AG04450 (cell line): ENCODE measurements at regions of chr3 and their contacts with region 1.

Region 1: GRCh38 chr3:108914774-108915641 is 38.7 kb downstream of the GUCA1C start:
- DNase-seq: peak; percentile 32
- H3K4me3 ChIP-seq: no peak overlapping the region
- H3K27ac ChIP-seq: no peak overlapping the region
- H3K27me3 ChIP-seq: no peaks in the 10 kb centered on the region
- CTCF ChIP-seq: peak; percentile 92

Region 2: DNA sequence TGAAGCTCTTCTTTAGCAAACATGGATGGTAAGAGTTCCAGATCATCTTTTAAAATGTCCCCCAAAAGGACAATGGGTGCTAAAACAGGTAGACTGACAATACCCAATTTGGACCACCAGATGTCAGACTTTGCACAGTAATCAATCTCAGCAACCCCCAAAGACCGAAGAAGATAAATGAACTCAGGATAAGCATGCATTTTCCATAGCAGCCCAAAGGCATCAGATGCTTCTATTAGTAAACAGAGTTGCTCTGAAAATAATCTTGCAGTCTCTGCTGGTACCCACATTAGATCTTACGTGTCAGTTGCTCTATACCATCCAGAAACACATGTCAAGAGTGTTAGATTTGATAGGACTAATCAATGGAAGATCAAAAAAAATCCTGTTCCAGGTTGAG is 425.2 kb before region 1 on chr3:
- CTCF ChIA-PET with region 1: interaction called, 25 read pairs
- POLR2A ChIA-PET with region 1: no interaction called
- DNase-seq: no peak
- H3K4me3 ChIP-seq: no peak overlapping the region
- H3K27ac ChIP-seq: no peak overlapping the region
- H3K27me3 ChIP-seq: no peaks in the 10 kb centered on the region
- CTCF ChIP-seq: peak; percentile 74

Region 3: DNA sequence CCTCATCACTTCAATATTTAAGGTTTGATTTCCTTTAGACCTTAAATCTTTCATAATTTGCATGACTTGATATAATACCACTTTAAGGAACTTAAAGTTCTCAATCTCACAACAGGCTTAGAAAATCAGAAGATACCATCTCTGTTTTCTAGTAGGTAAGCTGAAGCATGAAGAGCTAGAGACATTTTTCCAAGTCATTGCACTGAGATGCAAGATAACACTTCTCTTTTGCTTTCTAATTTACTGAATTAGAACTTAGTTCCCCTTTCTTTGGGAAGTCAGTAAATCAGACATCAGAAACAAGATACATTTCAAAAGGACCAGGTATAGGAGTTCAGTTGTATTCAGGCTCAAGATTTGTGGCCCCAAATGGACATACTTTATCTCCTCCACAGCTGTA is 245.8 kb before region 1 on chr3:
- CTCF ChIA-PET with region 1: interaction called, 184 read pairs
- POLR2A ChIA-PET with region 1: no interaction called
- DNase-seq: no peak
- H3K4me3 ChIP-seq: no peak overlapping the region
- H3K27ac ChIP-seq: no peak overlapping the region
- H3K27me3 ChIP-seq: no peaks in the 10 kb centered on the region
- CTCF ChIP-seq: no peak

Region 4: DNA sequence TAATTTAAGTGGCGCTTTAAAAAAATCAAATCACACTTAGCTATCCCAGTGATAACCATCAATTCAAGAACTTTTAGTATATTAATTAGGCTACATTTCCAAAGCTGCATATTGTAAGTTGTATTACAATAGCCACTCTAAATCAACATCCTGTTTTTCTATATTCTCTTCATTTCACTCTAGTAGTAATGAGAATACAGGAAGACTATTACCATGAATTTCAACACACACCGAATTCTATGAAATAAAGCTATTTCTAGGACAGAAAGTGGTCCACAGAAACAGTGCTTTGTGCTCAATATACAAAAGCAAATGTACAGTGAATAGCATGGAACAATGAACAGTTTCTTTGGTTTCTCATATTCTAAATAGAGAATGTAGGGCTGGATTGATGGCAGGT is 67.8 kb before region 1 on chr3:
- CTCF ChIA-PET with region 1: no interaction called
- POLR2A ChIA-PET with region 1: no interaction called
- DNase-seq: no peak
- H3K4me3 ChIP-seq: no peak overlapping the region
- H3K27ac ChIP-seq: no peak overlapping the region
- H3K27me3 ChIP-seq: peaks cover 3% of the 10 kb centered on the region
- CTCF ChIP-seq: no peak

Region 5: GRCh38 chr3:108897883-108898282 is 17.1 kb before region 1 on chr3:
- CTCF ChIA-PET with region 1: interaction called, 10 read pairs
- POLR2A ChIA-PET with region 1: interaction called, 3 read pairs
- DNase-seq: no peak
- H3K4me3 ChIP-seq: no peak overlapping the region
- H3K27ac ChIP-seq: no peak overlapping the region
- H3K27me3 ChIP-seq: no peaks in the 10 kb centered on the region
- CTCF ChIP-seq: no peak

Region 6: GRCh38 chr3:108940568-108941263 is 25.7 kb after region 1 on chr3:
- CTCF ChIA-PET with region 1: interaction called, 12 read pairs
- POLR2A ChIA-PET with region 1: no interaction called
- DNase-seq: no peak
- H3K4me3 ChIP-seq: no peak overlapping the region
- H3K27ac ChIP-seq: no peak overlapping the region
- H3K27me3 ChIP-seq: peaks cover 4% of the 10 kb centered on the region
- CTCF ChIP-seq: no peak

Region 7: GRCh38 chr3:108998436-108998835 is 83.4 kb after region 1 on chr3:
- CTCF ChIA-PET with region 1: no interaction called
- POLR2A ChIA-PET with region 1: no interaction called
- DNase-seq: no peak
- H3K4me3 ChIP-seq: no peak overlapping the region
- H3K27ac ChIP-seq: no peak overlapping the region
- H3K27me3 ChIP-seq: no peaks in the 10 kb centered on the region
- CTCF ChIP-seq: no peak